IMR-90 (cell line): ENCODE measurements at regions of chr6 and their contacts with region 1.

Region 1: DNA sequence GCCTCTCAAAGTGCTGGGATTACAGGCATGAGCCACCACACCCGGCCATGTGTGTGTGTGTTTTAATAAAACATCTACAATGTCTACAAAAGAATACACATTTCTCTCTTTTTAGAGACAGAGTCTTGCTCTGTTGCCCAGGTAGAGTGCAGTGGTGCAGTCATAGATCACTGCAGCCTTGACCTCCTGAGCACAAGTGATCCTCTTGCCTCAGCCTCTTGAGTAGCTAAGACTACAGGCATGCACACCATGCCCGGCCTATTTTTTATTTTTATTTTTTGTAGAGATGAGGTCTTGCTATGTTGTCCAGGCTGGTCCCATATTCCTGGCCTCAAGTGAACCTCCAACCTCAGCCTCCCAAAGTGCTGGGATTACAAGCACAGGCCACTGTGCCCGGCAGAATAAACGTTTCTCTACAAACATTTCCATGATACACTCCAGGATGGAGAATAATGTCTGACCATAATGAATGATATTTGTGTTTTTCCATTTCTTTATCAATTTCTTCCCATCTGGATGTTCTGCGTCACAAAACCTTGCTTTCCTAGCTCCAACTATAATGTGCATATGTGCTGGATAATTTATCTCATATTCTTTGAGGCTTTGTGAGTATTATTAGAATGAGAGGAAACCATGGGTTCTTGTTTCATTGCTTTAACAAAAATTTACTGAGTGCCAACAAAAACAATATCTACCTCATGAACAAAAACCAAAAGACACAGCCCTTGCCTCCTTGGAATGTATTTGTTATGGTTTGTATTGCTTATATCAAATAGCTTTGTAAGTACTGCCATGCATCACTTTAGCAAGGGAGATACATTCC is 28.6 kb upstream of the CCN2 start:
- DNase-seq: peak; percentile 97
- ATAC-seq: peak; percentile 70
- H3K4me3 ChIP-seq: no peak overlapping the region
- H3K27ac ChIP-seq: peak overlapping the region; percentile 85
- H3K4me1 ChIP-seq: peaks cover 19% of the 10 kb centered on the region
- H3K27me3 ChIP-seq: no peaks in the 10 kb centered on the region
- CTCF ChIP-seq: no peak
- POLR2A ChIP-seq: no peak
- RAD21 ChIP-seq: no peak

Region 2: DNA sequence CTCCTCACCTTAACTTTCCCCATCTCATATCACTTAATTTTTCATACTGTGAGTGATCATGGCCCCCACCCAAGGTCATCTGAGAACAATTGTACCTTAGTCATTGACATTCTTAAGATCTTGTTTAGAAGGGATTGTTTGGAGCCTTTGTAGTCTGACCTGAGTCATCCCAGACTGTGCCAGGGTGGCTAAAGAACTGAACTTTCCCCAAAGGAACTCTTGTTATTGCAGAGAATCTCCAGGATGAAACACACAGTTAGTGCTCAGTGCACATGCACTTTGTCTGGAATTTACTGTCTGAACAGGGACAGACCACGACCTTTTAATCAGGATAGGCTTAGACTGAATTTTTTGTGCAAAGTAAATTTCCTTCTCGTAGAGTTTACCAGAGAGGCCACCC is 84.0 kb after region 1 on chr6:
- CTCF ChIA-PET with region 1: no interaction called
- POLR2A ChIA-PET with region 1: no interaction called
- dilution Hi-C with region 1: no loop called
- in situ Hi-C with region 1: no loop called
- intact Hi-C with region 1: loop called (anchors 5 kb)
- DNase-seq: peak; percentile 85
- ATAC-seq: peak; percentile 31
- H3K4me3 ChIP-seq: no peak overlapping the region
- H3K27ac ChIP-seq: peak overlapping the region; percentile 81
- H3K4me1 ChIP-seq: peaks cover 11% of the 10 kb centered on the region; the same call in 1 of the 2 replicates
- H3K27me3 ChIP-seq: no peaks in the 10 kb centered on the region
- CTCF ChIP-seq: no peak
- POLR2A ChIP-seq: no peak
- RAD21 ChIP-seq: no peak

Region 3: DNA sequence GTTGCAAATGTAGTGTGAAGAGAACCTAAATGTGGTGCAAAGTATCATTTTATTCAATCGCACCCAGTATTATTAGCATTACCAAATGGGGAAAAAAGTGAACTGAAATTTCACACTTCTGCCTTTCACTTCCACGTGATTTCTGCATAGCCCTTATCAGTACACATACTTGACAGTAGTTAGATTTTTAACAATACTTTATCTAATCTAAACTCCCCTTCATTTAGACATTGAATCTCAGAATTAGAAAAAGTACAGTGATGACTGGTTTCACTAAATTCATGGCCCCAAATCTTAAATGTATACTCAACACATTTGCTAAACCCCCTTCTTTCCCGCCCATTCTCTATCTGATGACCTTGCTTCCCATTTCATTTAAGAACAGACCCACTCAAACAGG is 518.9 kb after region 1 on chr6:
- CTCF ChIA-PET with region 1: no interaction called
- POLR2A ChIA-PET with region 1: no interaction called
- dilution Hi-C with region 1: no loop called
- in situ Hi-C with region 1: no loop called
- intact Hi-C with region 1: no loop called
- DNase-seq: no peak
- ATAC-seq: no peak
- H3K4me3 ChIP-seq: no peak overlapping the region
- H3K27ac ChIP-seq: no peak overlapping the region
- H3K4me1 ChIP-seq: peaks cover 2% of the 10 kb centered on the region; the same call in 1 of the 2 replicates
- H3K27me3 ChIP-seq: no peaks in the 10 kb centered on the region
- CTCF ChIP-seq: no peak
- POLR2A ChIP-seq: no peak
- RAD21 ChIP-seq: no peak